ENCODE measurements at regions of chr1 and their contacts with region 1.

Region 1: DNA sequence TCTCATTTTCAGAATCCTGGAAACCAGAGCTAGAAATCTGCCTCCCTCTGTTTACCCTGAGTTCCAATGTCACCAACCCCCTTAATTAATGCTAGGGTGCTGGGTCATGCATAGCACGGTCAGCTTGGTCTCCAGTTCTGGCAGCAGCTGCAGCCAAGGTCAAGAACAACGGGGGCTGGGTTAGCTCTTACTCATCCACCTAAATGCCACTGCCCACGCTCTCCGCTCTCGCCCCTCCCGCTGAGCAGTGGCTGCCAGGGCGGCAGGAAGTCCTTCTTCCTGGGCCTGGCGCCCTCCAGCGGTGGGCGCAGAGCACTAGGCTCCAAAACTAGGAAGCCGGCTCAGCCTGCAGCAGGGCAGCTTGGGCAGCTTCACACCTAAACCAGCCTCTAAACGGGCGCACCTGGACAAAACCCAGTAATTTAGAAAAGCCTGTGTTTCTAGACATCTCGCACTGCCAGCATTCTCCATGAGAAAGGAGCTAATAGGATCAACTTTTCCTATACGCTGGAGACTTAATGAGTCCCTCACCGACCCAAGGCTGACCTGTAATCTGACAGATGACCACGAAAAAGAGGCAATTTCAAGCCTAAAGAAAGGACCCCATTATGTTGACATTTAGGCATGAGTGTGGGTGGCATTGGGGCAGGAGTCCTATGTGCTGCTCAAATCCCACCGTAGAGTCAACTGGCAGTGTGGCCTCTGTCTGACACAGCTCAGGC is 78.3 kb upstream of the LRRN2 start:
- DNase-seq: peak; percentile 81
- H3K4me3 ChIP-seq: peak overlapping the region in 1 of 2 experiments; percentile 7; a peak in 1 of 4 replicates
- H3K27ac ChIP-seq: no peak overlapping the region
- H3K4me1 ChIP-seq: peaks cover 0 to 9% of the 10 kb centered on the region in 2 experiments; a peak in 1 of 4 replicates
- H3K27me3 ChIP-seq: peaks cover 2% of the 10 kb centered on the region; the same call in 1 of the 2 replicates
- CTCF ChIP-seq: peak; percentile 73
- EP300 ChIP-seq: no peak
- RAD21 ChIP-seq: peak; percentile 82

Region 2: DNA sequence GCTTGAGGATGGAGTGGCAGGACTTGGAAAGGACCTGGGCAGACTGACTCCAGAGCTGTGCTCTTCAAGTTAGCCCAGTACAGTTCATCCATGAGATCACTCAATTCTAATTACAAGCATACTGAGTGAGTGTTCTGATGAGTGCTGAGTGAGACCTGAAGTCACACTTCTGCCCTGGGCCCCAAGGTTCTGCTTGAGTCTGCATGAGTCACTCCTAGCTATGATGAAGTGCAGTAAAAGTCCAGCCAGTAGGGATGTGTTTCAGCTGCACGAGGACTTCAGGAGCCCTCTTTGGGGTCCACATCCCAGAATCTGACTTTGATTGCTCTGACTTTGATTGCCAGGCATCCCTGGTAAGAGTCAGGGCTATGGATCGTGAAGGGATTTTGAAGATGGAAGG is 440.0 kb before region 1 on chr1:
- CTCF ChIA-PET with region 1: no interaction called
- POLR2A ChIA-PET with region 1: no interaction called
- DNase-seq: no peak
- H3K4me3 ChIP-seq: no peak overlapping the region
- H3K27ac ChIP-seq: no peak overlapping the region; a peak in 2 of 4 replicates
- H3K4me1 ChIP-seq: peaks cover 4 to 51% of the 10 kb centered on the region in 2 experiments; a peak in 2 of 4 replicates
- H3K27me3 ChIP-seq: peaks cover 9% of the 10 kb centered on the region; the same call in 1 of the 2 replicates
- CTCF ChIP-seq: no peak
- EP300 ChIP-seq: no peak
- RAD21 ChIP-seq: no peak

Region 3: DNA sequence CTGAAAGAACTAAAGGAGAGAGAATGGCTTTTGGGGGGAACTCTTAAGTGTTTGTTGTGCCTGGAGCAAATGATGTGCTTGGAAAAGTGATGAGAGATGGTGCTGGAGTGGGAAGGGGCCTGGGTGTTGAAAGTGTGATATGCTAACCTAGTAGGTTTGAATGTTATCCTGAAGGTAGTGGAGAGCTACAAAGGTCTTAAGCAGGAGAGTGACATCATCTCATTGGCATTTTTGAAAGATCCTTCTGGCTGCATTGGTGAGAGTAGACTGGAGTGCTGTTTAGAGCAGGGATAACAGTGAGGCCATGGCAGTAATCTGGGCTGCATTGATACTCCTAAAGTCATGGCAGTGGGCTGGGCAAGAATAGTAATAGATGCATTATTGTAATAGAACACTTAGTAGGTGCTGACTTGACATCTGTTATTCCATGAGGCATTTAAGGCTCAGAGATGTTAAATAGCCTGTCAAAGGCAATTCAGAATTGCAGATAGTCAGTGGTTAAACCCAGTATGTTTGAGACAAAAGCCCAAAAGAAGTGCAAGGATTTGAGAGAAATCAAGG is 203.2 kb before region 1 on chr1:
- CTCF ChIA-PET with region 1: interaction called, 148 read pairs
- POLR2A ChIA-PET with region 1: no interaction called
- DNase-seq: no peak
- H3K4me3 ChIP-seq: no peak overlapping the region
- H3K27ac ChIP-seq: no peak overlapping the region
- H3K4me1 ChIP-seq: no peaks in the 10 kb centered on the region; a peak in 1 of 4 replicates
- H3K27me3 ChIP-seq: no peaks in the 10 kb centered on the region
- CTCF ChIP-seq: no peak
- EP300 ChIP-seq: no peak
- RAD21 ChIP-seq: no peak

Region 4: DNA sequence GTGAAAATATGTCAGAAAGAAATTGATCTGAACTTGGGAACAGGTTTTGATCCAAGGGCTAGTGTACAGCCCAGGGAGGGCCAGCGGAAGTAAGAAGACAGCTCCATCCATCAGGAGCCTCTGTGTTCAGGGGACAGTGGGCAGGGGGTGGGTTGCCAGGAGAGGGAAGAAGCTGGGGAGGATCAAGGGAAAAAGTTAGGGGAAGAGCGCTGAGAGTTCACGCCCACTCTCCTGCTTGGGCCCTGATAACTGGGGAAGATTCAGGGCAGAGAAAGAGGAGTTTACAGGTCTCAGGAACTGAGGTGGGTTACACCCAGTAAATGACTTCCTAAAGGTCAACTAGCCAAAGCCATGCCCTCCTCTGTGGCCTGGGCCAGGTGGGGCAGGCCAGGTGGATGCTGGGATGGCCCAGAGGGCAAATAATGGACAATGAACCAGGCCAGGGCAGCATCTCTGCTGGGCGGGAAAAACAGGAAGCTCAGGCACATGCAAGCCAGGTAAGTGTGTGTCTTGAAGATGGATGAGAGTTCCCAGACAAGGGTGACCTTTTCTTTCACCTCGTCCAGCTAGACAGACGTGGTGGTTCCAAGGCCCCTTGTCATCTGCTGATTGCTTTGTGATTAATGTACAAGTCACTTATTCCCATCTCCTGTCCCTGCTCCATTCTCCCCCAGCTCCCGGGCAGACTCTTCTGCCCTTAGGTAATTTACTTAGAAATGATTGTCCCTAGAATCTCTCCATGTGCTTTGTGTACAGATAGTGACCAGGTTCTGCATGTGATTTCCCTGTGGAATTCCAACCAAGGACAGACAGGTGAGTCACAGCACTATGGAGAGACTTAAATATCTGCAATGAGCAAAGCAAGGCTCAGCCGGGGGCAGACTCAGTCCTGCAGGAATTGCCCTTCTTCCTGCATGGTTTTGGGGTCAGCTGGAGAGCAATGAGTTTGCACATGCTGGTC is 190.7 kb before region 1 on chr1:
- CTCF ChIA-PET with region 1: interaction called, 148 read pairs
- POLR2A ChIA-PET with region 1: no interaction called
- DNase-seq: no peak
- H3K4me3 ChIP-seq: no peak overlapping the region
- H3K27ac ChIP-seq: no peak overlapping the region
- H3K4me1 ChIP-seq: peaks cover 6 to 32% of the 10 kb centered on the region in 2 experiments; a peak in 3 of 4 replicates
- H3K27me3 ChIP-seq: no peaks in the 10 kb centered on the region
- CTCF ChIP-seq: no peak
- EP300 ChIP-seq: no peak
- RAD21 ChIP-seq: no peak

Region 5: DNA sequence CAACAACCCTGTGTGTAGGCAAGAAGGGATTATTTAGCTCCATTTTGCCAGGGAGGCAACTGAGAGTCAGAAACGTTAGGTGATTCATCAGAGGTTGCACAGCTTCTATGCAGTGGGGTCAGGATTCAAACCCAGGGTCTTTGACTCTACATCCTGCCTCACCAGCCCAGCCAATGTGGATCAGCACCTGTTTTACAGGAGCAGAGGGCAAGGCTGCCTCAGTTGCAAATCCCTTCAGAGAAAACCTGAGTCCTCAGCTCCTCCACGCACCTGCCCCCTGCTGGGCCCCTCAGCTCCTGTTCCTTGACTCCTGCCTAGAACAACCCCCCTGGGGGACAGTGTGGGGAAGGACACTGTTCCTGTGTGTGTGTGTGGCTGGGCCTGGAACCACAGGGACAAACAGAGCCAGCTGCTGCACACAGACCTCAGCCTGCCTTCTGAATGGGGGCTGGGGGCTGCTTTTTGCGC is 139.9 kb before region 1 on chr1:
- CTCF ChIA-PET with region 1: interaction called, 13 read pairs
- POLR2A ChIA-PET with region 1: no interaction called
- DNase-seq: peak; percentile 72
- H3K4me3 ChIP-seq: no peak overlapping the region
- H3K27ac ChIP-seq: no peak overlapping the region
- H3K4me1 ChIP-seq: peaks cover 0 to 16% of the 10 kb centered on the region in 2 experiments; a peak in 1 of 4 replicates
- H3K27me3 ChIP-seq: no peaks in the 10 kb centered on the region
- CTCF ChIP-seq: no peak; the same call in 1 of the 2 replicates
- EP300 ChIP-seq: no peak
- RAD21 ChIP-seq: peak; percentile 26

Region 6: GRCh38 chr1:204703826-204704612 is 59.8 kb before region 1 on chr1:
- CTCF ChIA-PET with region 1: no interaction called
- POLR2A ChIA-PET with region 1: no interaction called
- DNase-seq: no peak
- H3K4me3 ChIP-seq: no peak overlapping the region
- H3K27ac ChIP-seq: no peak overlapping the region
- H3K4me1 ChIP-seq: no peaks in the 10 kb centered on the region
- H3K27me3 ChIP-seq: no peaks in the 10 kb centered on the region; the same call in 1 of the 2 replicates
- CTCF ChIP-seq: no peak
- EP300 ChIP-seq: no peak
- RAD21 ChIP-seq: no peak

Region 7: GRCh38 chr1:204746838-204747442 is 16.9 kb before region 1 on chr1:
- CTCF ChIA-PET with region 1: interaction called, 57 read pairs
- POLR2A ChIA-PET with region 1: no interaction called
- DNase-seq: peak; percentile 52
- H3K4me3 ChIP-seq: peak overlapping the region in 1 of 2 experiments; percentile 14; a peak in 1 of 4 replicates
- H3K27ac ChIP-seq: no peak overlapping the region
- H3K4me1 ChIP-seq: peaks cover 0 to 21% of the 10 kb centered on the region in 2 experiments; a peak in 2 of 4 replicates
- H3K27me3 ChIP-seq: peaks cover 22% of the 10 kb centered on the region; the same call in 1 of the 2 replicates
- CTCF ChIP-seq: peak; percentile 86
- EP300 ChIP-seq: no peak
- RAD21 ChIP-seq: peak; percentile 53

Region 8: GRCh38 chr1:204782118-204782700 is 18.3 kb after region 1 on chr1:
- CTCF ChIA-PET with region 1: interaction called, 15 read pairs
- POLR2A ChIA-PET with region 1: no interaction called
- DNase-seq: no peak
- H3K4me3 ChIP-seq: no peak overlapping the region
- H3K27ac ChIP-seq: no peak overlapping the region
- H3K4me1 ChIP-seq: no peaks in the 10 kb centered on the region
- H3K27me3 ChIP-seq: 0 out of 2 replicates have a peak, but pooled peaks cover 7% of the 10 kb centered on the region
- CTCF ChIP-seq: no peak
- EP300 ChIP-seq: no peak
- RAD21 ChIP-seq: no peak

Region 9: DNA sequence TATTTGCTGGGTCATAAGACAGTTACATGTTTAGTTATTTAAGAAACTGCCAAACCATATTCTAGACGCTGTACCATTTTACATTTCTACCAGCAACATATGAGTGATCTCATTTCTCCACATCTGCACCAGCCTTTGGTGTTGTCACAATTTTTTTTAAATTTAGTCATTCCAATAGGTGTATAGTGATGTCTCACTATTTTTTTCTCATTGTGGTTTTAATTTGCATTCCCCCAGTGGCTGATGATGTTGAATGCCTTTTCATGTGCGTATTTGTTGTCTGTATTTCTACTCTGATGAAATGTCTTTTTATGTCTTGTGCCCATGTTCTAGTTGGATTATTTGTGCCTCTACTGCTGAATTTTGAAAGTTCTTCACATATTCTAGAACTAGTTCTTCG is 145.2 kb after region 1 on chr1:
- CTCF ChIA-PET with region 1: no interaction called
- POLR2A ChIA-PET with region 1: no interaction called
- DNase-seq: no peak
- H3K4me3 ChIP-seq: no peak overlapping the region
- H3K27ac ChIP-seq: no peak overlapping the region
- H3K4me1 ChIP-seq: no peaks in the 10 kb centered on the region
- H3K27me3 ChIP-seq: no peaks in the 10 kb centered on the region
- CTCF ChIP-seq: no peak
- EP300 ChIP-seq: no peak
- RAD21 ChIP-seq: no peak

Region 10: GRCh38 chr1:204989266-204990058 is 225.6 kb after region 1 on chr1:
- CTCF ChIA-PET with region 1: no interaction called
- POLR2A ChIA-PET with region 1: no interaction called
- DNase-seq: peak; percentile 95
- H3K4me3 ChIP-seq: no peak overlapping the region; a peak in 1 of 4 replicates
- H3K27ac ChIP-seq: no peak overlapping the region
- H3K4me1 ChIP-seq: peaks cover 0 to 2% of the 10 kb centered on the region in 2 experiments; a peak in 2 of 4 replicates
- H3K27me3 ChIP-seq: no peaks in the 10 kb centered on the region
- CTCF ChIP-seq: peak; percentile 98
- EP300 ChIP-seq: no peak
- RAD21 ChIP-seq: peak; percentile 99

Measured in SK-N-SH (cell line).